ENCODE measurements at regions of chr1 and their contacts with region 1.

Region 1: DNA sequence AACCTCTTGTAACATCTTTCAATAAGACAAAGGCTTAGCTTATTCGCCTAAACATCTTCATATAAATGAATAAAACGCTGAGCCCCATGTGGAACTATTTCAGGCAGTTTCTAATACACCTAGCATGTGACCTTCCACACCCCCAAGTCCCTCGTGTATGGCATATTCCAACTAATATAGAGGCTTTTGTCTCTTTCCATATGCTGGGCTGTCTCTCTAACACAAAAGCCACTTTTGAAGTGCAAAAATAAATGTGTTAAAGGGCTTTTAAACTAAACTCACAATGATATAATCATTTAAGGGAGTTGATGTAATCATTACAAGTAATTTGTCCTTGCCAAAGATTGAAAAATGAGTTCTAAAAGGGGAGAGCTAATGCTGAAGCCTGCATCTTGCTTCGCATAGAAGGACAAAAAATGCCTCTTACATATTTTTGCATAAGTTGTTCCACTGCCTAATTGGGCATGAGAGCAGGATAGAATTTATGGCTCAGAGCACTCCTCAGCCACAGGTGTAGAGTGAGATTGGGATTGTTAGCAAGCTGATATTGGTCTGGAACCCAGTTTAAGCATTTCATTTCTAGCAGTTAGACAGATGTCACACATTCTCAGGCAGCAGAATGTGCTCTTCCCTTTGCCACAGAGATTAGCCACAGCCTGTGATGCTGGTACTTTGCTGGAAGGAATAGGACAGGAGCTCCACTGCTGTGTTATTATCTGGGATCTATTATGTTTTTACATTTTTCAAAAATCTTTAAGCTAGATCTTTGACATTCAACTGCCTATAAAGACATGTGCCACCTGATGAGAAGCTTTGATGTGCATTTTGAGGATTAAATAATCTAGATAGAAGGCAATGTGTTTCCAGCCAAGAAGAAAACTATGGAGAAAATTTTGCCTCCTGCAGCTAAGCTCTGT is 1044.4 kb downstream of the ADGRL2 start:
- DNase-seq: no peak
- ATAC-seq: no peak
- H3K4me3 ChIP-seq: no peak overlapping the region
- H3K4me3 Mint-ChIP-seq: no peak overlapping the region
- H3K27ac ChIP-seq: no peak overlapping the region
- H3K27ac Mint-ChIP-seq: no peak overlapping the region
- H3K4me1 ChIP-seq: no peaks in the 10 kb centered on the region
- H3K4me1 Mint-ChIP-seq: peaks cover 0 to 5% (median 0%) of the 10 kb centered on the region in 7 donors
- H3K27me3 ChIP-seq: no peaks in the 10 kb centered on the region
- H3K27me3 Mint-ChIP-seq: peaks cover 0 to 4% (median 2%) of the 10 kb centered on the region in 5 donors

Region 2: GRCh38 chr1:82858031-82858430 is 12.9 kb after region 1 on chr1:
- CTCF ChIA-PET with region 1: no interaction called
- POLR2A ChIA-PET with region 1: no interaction called
- intact Hi-C with region 1: loop called in 1 of 2 experiments (anchors 1 kb)
- DNase-seq: no peak
- ATAC-seq: no peak
- H3K4me3 ChIP-seq: no peak overlapping the region
- H3K4me3 Mint-ChIP-seq: no peak overlapping the region
- H3K27ac ChIP-seq: no peak overlapping the region
- H3K27ac Mint-ChIP-seq: no peak overlapping the region
- H3K4me1 ChIP-seq: no peaks in the 10 kb centered on the region
- H3K4me1 Mint-ChIP-seq: no peaks in the 10 kb centered on the region
- H3K27me3 ChIP-seq: no peaks in the 10 kb centered on the region
- H3K27me3 Mint-ChIP-seq: no peaks in the 10 kb centered on the region

Measured in naive thymus-derived CD4-positive, alpha-beta T cell (primary cell).